Transverse colon (tissue), 4 donors: ENCODE measurements at regions of chr6 and their contacts with region 1.

Region 1: GRCh38 chr6:118893807-118894424 is at the start of gene ASF1A:
- DNase-seq: peak; percentile 97
- H3K4me3 ChIP-seq: peak within 1 kb of the TSS; percentile 68 to 92 (median 88)
- H3K27ac ChIP-seq: peak within 1 kb of the TSS; percentile 96 to 98 (median 98)
- H3K4me1 ChIP-seq: peaks cover 5 to 49% (median 16%) of the 10 kb centered on the region in 4 donors
- H3K27me3 ChIP-seq: no peaks in the 10 kb centered on the region
- CTCF ChIP-seq: peak; percentile 26 to 64 (median 46)
- EP300 ChIP-seq: no peak
- POLR2A ChIP-seq: peak; percentile 80
- total RNA-seq, gene ASF1A: 0.20 to 10.4 (median 9.7) TPM in 3 of 4 donors, not detected in the other

Region 2: DNA sequence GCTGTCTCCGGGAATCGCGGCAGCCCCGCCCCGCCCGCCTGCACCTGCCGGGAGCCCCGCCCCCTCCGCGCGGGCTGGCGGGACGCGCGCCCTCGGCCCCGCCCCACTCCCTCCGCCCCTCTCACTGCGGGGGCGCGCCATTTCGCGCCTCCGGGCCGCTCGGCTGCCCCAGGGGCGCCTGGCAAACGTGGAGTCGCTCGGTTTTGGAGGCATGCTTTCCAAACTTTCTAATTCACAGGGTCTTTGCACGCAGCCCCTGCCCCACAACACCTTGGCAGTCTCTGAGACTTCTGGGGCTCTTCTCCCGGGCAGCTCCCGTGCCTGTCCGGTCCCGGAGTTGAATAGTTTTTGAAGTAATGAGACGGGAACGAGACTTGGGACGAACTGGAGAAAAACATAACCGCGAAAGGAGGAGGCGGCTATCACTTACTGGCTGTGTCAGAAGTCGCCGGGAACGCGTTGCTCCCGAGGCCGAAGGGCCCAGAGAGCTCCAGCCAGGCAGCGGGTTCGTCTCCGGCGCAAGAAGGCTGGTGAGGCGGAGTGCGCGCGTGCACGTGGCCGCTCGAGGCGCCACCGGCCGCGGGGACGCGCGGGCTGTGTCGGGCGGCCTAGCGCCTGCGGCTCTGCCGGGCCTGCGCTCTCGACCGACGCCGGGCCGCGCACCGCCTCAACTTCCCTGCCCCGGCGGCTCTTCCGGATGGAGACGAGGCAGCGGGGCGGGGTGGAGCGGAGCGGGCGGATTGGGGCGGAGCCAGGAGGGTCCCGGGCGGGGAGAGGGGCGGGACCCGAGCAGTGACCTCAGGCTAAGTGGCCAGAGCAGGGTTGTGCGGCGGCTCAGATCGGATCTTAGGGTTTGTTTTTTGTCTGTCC is 40.8 kb after region 1 on chr6 and contains the start of gene MCM9:
- in situ Hi-C with region 1: no loop called
- intact Hi-C with region 1: loop called (anchors 5 kb)
- DNase-seq: peak; percentile 94
- H3K4me3 ChIP-seq: peak within 1 kb of the TSS; percentile 66 to 97 (median 84)
- H3K27ac ChIP-seq: peak within 1 kb of the TSS; percentile 97 to 99 (median 98)
- H3K4me1 ChIP-seq: peaks cover 0 to 16% (median 10%) of the 10 kb centered on the region in 4 donors
- H3K27me3 ChIP-seq: no peaks in the 10 kb centered on the region
- CTCF ChIP-seq: no peak
- EP300 ChIP-seq: no peak
- POLR2A ChIP-seq: peak; percentile 48
- total RNA-seq, gene MCM9: 5.2 to 27.6 (median 19.0) TPM

Region 3: GRCh38 chr6:119078376-119079282 is 184.7 kb after region 1 on chr6 and contains the start of gene FAM184A:
- in situ Hi-C with region 1: no loop called
- intact Hi-C with region 1: loop called (anchors 5 kb)
- DNase-seq: peak; percentile 65
- H3K4me3 ChIP-seq: peak within 1 kb of the TSS; percentile 59 to 83 (median 70)
- H3K27ac ChIP-seq: peak within 1 kb of the TSS; percentile 59 to 84 (median 70)
- H3K4me1 ChIP-seq: peaks cover 0 to 13% (median 6%) of the 10 kb centered on the region in 4 donors
- H3K27me3 ChIP-seq: peaks cover 4% of the 10 kb centered on the region
- CTCF ChIP-seq: peak; percentile 26 to 40 (median 32)
- EP300 ChIP-seq: no peak
- POLR2A ChIP-seq: no peak
- total RNA-seq, gene FAM184A: 0.20 to 13.1 (median 2.9) TPM